AG04449 (cell line): ENCODE measurements at regions of chr1 and their contacts with region 1.

Region 1: GRCh38 chr1:161192476-161193465 is 6.1 kb downstream of the ADAMTS4 start:
- DNase-seq: no peak
- H3K4me3 ChIP-seq: no peak overlapping the region
- CTCF ChIP-seq: peak; percentile 90

Region 2: DNA sequence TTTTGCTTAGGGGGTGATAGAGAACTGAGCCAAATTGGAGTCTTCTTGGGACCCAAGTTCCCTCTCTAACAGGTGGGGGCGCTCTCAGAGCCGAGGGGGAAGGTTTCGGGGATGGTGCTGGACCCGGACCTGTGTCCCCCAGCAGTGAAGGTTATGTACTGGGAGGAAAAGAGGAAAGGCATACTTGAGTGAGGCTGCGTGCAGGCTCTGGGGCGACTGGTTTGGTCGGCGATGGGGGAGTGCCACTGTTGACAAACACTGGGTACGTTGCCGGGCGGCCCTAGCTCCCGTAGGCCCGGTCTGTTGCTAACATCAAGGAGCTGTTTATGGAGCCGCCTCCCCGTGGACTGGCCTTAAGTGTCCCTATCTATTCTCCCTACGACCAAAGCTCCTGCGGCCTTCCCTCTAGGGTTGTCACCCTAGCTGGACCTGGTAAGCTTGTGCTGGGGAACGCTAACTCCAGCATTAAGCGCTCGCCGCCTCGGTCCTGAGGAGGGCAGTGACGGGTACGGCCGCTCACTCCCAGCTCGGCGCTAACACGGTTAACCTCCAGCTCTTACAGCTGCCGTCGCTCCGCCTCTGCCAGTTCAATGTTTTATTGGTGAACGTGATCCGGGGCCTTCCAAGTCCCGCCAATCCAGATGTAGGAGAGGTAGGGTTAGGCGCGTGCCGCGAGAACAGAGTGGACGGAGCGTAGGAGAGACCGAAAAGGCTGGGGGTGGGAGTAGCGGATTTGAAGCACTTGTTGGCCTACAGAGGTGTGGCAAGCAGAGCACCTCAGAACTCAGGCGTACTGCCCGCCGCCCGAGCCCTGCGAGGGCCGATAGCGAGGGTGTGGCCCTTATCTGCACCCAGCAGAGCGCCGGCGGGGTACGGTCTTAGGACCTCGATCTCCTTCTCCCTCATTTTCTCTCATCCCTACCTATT is 26.8 kb before region 1 on chr1 and contains the start of gene PPOX:
- CTCF ChIA-PET with region 1: interaction called, 14 read pairs
- POLR2A ChIA-PET with region 1: interaction called, 3 read pairs
- DNase-seq: peak; percentile 91
- H3K4me3 ChIP-seq: peak within 1 kb of the TSS; percentile 93
- CTCF ChIP-seq: peak; percentile 52

Region 3: GRCh38 chr1:161177112-161177935 is 15.4 kb before region 1 on chr1 and contains the start of gene B4GALT3:
- CTCF ChIA-PET with region 1: interaction called, 67 read pairs
- POLR2A ChIA-PET with region 1: interaction called, 5 read pairs
- DNase-seq: no peak
- H3K4me3 ChIP-seq: peak within 1 kb of the TSS; percentile 99
- CTCF ChIP-seq: no peak

Region 4: GRCh38 chr1:161330346-161330745 is 137.6 kb after region 1 on chr1:
- CTCF ChIA-PET with region 1: no interaction called
- POLR2A ChIA-PET with region 1: no interaction called
- DNase-seq: no peak
- H3K4me3 ChIP-seq: no peak overlapping the region
- CTCF ChIP-seq: no peak

Region 5: GRCh38 chr1:161367684-161368400 is 175.1 kb after region 1 on chr1 and contains the start of gene CFAP126:
- CTCF ChIA-PET with region 1: interaction called, 13 read pairs
- POLR2A ChIA-PET with region 1: no interaction called
- DNase-seq: peak; percentile 24
- H3K4me3 ChIP-seq: no peak within 1 kb of the TSS
- CTCF ChIP-seq: no peak

Region 6: GRCh38 chr1:161374373-161374772 is 181.6 kb after region 1 on chr1:
- CTCF ChIA-PET with region 1: interaction called, 19 read pairs
- POLR2A ChIA-PET with region 1: no interaction called
- DNase-seq: no peak
- H3K4me3 ChIP-seq: no peak overlapping the region
- CTCF ChIP-seq: peak; percentile 11